CD8-positive, alpha-beta T cell (primary cell): ENCODE measurements at regions of chr9 and their contacts with region 1.

Region 1: GRCh38 chr9:95494416-95495371 is 22.1 kb downstream of the PTCH1 start:
- DNase-seq: peak; percentile 71 to 95 (median 88)
- ATAC-seq: peak; percentile 95
- H3K4me3 ChIP-seq: peak overlapping the region; percentile 28 to 38
- H3K4me3 Mint-ChIP-seq: peak overlapping the region; percentile 83
- H3K27ac ChIP-seq: peak overlapping the region; percentile 69
- H3K27ac Mint-ChIP-seq: peak overlapping the region; percentile 96
- H3K4me1 ChIP-seq: peaks cover 81% of the 10 kb centered on the region
- H3K4me1 Mint-ChIP-seq: peaks cover 78% of the 10 kb centered on the region
- H3K27me3 ChIP-seq: no peaks in the 10 kb centered on the region
- H3K27me3 Mint-ChIP-seq: peaks cover 6% of the 10 kb centered on the region
- CTCF ChIP-seq: no peak

Region 2: GRCh38 chr9:95462249-95463147 is 32.2 kb before region 1 on chr9:
- CTCF ChIA-PET with region 1: interaction called, 4 read pairs
- POLR2A ChIA-PET with region 1: interaction called, 6 read pairs
- intact Hi-C with region 1: loop called (anchors 2 kb)
- DNase-seq: peak; percentile 50 to 93 (median 67)
- ATAC-seq: peak; percentile 96
- H3K4me3 ChIP-seq: peak overlapping the region; percentile 32 to 36
- H3K4me3 Mint-ChIP-seq: peak overlapping the region; percentile 85
- H3K27ac ChIP-seq: no peak overlapping the region
- H3K27ac Mint-ChIP-seq: peak overlapping the region; percentile 84
- H3K4me1 ChIP-seq: peaks cover 25% of the 10 kb centered on the region
- H3K4me1 Mint-ChIP-seq: peaks cover 34% of the 10 kb centered on the region
- H3K27me3 ChIP-seq: no peaks in the 10 kb centered on the region
- H3K27me3 Mint-ChIP-seq: peaks cover 4% of the 10 kb centered on the region
- CTCF ChIP-seq: no peak

Region 3: GRCh38 chr9:95552814-95553546 is 58.3 kb after region 1 on chr9:
- CTCF ChIA-PET with region 1: no interaction called
- POLR2A ChIA-PET with region 1: no interaction called
- intact Hi-C with region 1: loop called in 1 of 2 experiments (anchors 2 kb)
- DNase-seq: peak in 4 of 9 experiments; percentile 45 to 74 (median 60)
- ATAC-seq: peak; percentile 94
- H3K4me3 ChIP-seq: no peak overlapping the region
- H3K4me3 Mint-ChIP-seq: peak overlapping the region; percentile 38
- H3K27ac ChIP-seq: no peak overlapping the region
- H3K27ac Mint-ChIP-seq: no peak overlapping the region
- H3K4me1 ChIP-seq: no peaks in the 10 kb centered on the region
- H3K4me1 Mint-ChIP-seq: peaks cover 6% of the 10 kb centered on the region
- H3K27me3 ChIP-seq: peaks cover 0 to 4% of the 10 kb centered on the region in 2 experiments
- H3K27me3 Mint-ChIP-seq: peaks cover 43% of the 10 kb centered on the region
- CTCF ChIP-seq: no peak

Region 4: DNA sequence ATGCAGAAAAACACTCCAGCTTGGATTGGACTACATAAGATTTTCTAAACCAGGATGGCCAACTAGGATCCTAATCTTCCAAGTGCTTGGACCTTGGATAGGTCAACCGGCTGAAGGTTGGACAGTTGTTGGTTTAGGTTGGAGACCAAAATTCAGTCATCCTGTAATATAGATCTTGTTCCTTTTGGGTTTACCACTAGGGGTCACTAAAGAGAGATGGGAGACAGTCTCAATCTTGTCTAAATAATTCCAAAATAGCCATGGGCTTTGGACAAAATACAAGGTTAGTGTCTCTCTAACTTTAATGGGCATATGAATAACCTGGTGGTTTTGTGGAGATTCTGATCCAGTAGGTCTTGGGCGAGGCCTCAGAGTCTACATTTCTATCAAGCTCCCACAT is 232.1 kb after region 1 on chr9:
- CTCF ChIA-PET with region 1: interaction called, 4 read pairs
- POLR2A ChIA-PET with region 1: interaction called, 3 read pairs
- intact Hi-C with region 1: loop called in 1 of 2 experiments (anchors 10 kb)
- DNase-seq: peak in 2 of 9 experiments; percentile 39 to 55
- ATAC-seq: no peak
- H3K4me3 ChIP-seq: no peak overlapping the region
- H3K4me3 Mint-ChIP-seq: no peak overlapping the region
- H3K27ac ChIP-seq: no peak overlapping the region
- H3K27ac Mint-ChIP-seq: no peak overlapping the region
- H3K4me1 ChIP-seq: peaks cover 28% of the 10 kb centered on the region
- H3K4me1 Mint-ChIP-seq: peaks cover 47% of the 10 kb centered on the region
- H3K27me3 ChIP-seq: no peaks in the 10 kb centered on the region
- H3K27me3 Mint-ChIP-seq: peaks cover 2% of the 10 kb centered on the region
- CTCF ChIP-seq: peak; percentile 46

Region 5: GRCh38 chr9:96061293-96061987 is 566.7 kb after region 1 on chr9:
- CTCF ChIA-PET with region 1: no interaction called
- POLR2A ChIA-PET with region 1: no interaction called
- intact Hi-C with region 1: loop called (anchors 2 to 5 kb)
- DNase-seq: peak; percentile 19 to 65 (median 56)
- ATAC-seq: peak; percentile 67
- H3K4me3 ChIP-seq: no peak overlapping the region
- H3K4me3 Mint-ChIP-seq: no peak overlapping the region
- H3K27ac ChIP-seq: no peak overlapping the region
- H3K27ac Mint-ChIP-seq: no peak overlapping the region
- H3K4me1 ChIP-seq: peaks cover 5% of the 10 kb centered on the region
- H3K4me1 Mint-ChIP-seq: peaks cover 13% of the 10 kb centered on the region
- H3K27me3 ChIP-seq: no peaks in the 10 kb centered on the region
- H3K27me3 Mint-ChIP-seq: peaks cover 2% of the 10 kb centered on the region
- CTCF ChIP-seq: peak; percentile 71